Endothelial cell of umbilical vein (primary cell): ENCODE measurements at regions of chr16 and their contacts with region 1.

Region 1: DNA sequence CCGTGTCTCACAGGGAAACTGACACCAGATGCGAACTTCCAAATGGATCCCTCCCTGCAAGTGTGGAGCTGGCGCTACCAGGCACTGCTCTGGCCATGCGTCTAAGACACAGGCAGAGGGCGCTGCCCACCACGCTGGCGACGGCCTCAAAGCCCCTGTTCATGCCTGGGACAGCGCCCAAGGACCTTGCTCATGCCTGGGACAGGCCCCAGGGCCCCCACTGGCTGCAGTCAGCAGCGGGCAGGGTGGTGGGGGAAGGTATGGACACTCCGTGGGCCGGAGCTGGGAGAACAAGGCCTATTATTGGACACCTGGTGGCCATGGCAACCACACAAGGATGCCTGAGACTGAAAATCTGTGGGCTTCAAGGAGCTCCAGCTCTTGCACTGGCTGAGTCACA is 8.8 kb downstream of the ZG16B start:
- DNase-seq: peak; percentile 70
- H3K4me3 ChIP-seq: no peak overlapping the region
- H3K27ac ChIP-seq: no peak overlapping the region
- H3K4me1 ChIP-seq: peaks cover 23% of the 10 kb centered on the region
- H3K27me3 ChIP-seq: no peaks in the 10 kb centered on the region
- CTCF ChIP-seq: peak; percentile 95 to 98
- POLR2A ChIP-seq: no peak

Region 2: DNA sequence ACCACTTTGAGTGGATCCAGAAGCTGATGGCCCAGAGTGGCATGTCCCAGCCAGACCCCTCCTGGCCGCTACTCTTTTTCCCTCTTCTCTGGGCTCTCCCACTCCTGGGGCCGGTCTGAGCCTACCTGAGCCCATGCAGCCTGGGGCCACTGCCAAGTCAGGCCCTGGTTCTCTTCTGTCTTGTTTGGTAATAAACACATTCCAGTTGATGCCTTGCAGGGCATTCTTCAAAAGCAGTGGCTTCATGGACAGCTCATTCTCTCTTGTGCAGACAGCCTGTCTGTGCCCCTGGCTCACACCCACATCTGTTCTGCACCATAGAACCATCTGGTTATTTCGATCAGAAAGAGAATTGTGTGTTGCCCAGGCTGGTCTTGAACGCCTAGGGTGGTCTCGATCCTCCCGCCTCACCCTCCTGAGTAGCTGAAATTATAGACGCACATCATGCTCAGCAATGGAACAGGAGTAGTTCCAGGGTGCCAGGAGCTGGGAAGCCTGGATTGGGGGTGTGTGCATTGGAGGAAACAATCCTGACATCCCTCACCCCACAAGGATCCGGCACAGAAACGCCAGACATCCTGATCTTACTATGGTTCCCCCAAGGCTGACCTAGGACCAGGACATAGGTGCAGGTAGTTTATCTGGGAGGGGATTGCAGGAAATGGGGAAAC is 17.3 kb before region 1 on chr16:
- CTCF ChIA-PET with region 1: interaction called, 12 read pairs
- POLR2A ChIA-PET with region 1: no interaction called
- dilution Hi-C with region 1: no loop called
- intact Hi-C with region 1: no loop called
- DNase-seq: no peak
- H3K4me3 ChIP-seq: no peak overlapping the region
- H3K27ac ChIP-seq: no peak overlapping the region
- H3K4me1 ChIP-seq: no peaks in the 10 kb centered on the region
- H3K27me3 ChIP-seq: no peaks in the 10 kb centered on the region
- CTCF ChIP-seq: no peak
- POLR2A ChIP-seq: no peak

Region 3: DNA sequence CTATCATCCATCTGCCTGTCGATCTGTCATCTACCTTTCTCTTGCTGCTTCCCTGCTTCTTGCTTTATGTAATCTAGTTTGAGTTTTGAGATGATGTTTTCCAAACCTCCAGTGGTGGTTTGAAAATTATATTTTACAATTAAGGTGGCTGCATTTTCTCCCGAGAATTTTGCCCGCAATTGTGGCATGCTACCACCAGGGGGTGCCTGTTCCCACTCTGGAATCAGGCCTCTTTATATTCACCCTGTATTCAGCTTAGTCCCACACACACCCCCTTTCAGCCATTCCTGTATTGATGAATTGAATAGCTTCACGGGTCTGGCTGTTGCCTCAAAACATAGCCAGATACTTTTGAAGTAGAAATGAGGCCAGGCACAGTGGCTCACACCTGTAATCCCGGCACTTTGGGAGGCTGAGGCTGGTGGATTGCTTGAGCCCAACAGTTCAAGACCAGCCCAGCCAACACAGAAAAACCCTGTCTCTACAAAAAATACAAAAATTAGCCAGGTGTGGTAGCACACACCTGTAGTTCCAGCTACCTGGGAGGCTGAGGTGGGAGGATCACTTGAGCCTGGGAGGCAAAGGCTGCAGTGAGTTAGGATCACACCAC is 15.9 kb after region 1 on chr16:
- CTCF ChIA-PET with region 1: interaction called, 16 read pairs
- POLR2A ChIA-PET with region 1: no interaction called
- dilution Hi-C with region 1: no loop called
- intact Hi-C with region 1: no loop called
- DNase-seq: no peak
- H3K4me3 ChIP-seq: no peak overlapping the region
- H3K27ac ChIP-seq: no peak overlapping the region
- H3K4me1 ChIP-seq: no peaks in the 10 kb centered on the region
- H3K27me3 ChIP-seq: peaks cover 2 to 7% of the 10 kb centered on the region in 2 experiments
- CTCF ChIP-seq: peak; percentile 36 to 62
- POLR2A ChIP-seq: no peak

Region 4: DNA sequence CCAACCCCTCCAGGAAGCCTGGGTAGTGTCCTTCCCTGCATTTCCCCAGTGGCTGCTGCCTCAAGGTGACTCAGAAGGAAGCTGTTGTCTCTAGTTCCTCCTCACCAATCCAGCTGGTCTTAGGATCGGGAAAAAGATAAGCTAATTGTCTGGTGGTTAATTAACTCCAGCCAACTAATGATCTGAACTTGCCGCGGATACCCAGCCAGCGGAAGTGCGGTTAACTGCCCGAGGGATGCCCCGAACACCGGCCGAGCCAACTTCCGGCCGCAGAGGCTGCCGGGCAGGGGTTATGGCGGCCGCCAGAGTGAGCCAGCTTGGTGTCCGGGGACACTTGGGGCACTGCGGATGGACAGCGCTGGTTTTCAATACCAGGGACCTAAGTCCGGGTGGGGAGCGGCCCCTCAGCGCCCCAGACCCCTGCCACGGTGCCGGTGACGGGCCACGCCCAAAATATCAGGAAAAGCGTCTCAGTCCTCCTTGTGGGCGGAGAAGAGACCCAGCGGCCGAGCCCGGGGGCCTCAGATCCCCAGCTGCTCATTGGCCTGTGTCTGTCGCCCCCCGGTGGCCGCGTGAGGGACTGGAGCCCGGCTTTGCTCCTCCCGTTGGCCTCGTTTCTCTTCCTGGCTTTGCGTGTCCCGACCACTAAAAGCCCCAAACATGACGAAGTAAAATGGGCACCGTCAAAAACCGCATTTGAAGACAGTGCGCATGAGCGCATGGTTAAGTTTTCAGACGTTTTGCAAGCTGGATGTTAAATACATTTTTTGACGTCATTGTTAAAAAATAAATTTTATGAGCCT is 29.3 kb after region 1 on chr16:
- CTCF ChIA-PET with region 1: interaction called, 372 read pairs
- POLR2A ChIA-PET with region 1: interaction called, 8 read pairs
- dilution Hi-C with region 1: no loop called
- intact Hi-C with region 1: loop called (anchors 1 kb)
- DNase-seq: peak; percentile 93
- H3K4me3 ChIP-seq: peak overlapping the region in 2 of 3 experiments; percentile 34 to 45
- H3K27ac ChIP-seq: peak overlapping the region; percentile 81
- H3K4me1 ChIP-seq: peaks cover 5% of the 10 kb centered on the region
- H3K27me3 ChIP-seq: peaks cover 0 to 2% of the 10 kb centered on the region in 2 experiments
- CTCF ChIP-seq: peak; percentile 99
- POLR2A ChIP-seq: peak; percentile 76

Region 5: DNA sequence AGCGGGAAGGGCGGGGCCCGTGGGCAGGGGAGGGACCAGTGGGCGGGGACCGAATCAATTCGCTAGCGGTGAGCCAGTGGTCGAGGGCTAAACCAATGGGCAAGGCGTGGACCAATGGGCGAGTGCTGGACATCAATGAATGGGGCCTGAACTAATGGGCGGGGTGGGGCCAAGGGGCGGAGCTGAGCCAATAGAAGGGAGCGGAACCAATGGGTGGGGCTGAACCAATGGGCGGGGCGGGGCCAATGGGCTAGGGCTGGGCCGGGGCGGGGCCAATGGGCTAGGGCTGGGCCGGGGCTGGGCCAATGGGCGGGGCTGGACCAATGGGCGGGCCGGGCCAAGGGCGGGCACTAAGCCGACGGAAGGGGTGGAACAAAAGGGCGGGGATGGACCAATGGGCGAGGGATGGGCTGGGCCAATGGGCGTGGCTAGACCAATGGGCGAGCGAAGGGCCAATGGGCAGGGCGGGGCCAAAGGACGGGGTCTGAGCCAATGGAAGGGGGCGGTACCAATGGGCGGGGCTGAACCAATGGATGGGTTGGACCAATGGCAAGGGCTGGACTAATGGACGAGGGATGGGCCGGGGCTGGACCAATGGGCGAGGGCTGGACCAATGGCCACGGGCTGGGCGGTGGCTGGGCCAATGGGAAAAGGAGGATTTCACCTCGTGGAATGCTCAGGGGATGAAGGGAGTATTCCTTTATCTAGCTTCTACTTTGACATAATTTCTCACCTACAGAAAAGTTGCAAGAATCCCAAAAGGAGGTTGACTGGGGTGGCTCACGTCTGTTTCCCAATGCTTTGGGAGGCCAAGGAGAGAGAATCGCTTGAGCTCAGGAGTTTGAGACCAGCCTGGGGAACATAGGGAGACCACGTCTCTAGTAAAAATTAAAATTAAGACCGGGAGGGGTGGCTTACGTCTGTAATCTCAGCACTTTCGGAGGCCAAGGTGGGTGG is 66.8 kb after region 1 on chr16:
- CTCF ChIA-PET with region 1: interaction called, 26 read pairs
- POLR2A ChIA-PET with region 1: interaction called, 3 read pairs
- dilution Hi-C with region 1: no loop called
- intact Hi-C with region 1: loop called (anchors 1 kb)
- DNase-seq: peak; percentile 99
- H3K4me3 ChIP-seq: peak overlapping the region in 2 of 3 experiments; percentile 73 to 78
- H3K27ac ChIP-seq: no peak overlapping the region
- H3K4me1 ChIP-seq: peaks cover 9% of the 10 kb centered on the region
- H3K27me3 ChIP-seq: no peaks in the 10 kb centered on the region
- CTCF ChIP-seq: no peak
- POLR2A ChIP-seq: no peak

Region 6: GRCh38 chr16:2919511-2920255 is 80.8 kb after region 1 on chr16:
- CTCF ChIA-PET with region 1: interaction called, 50 read pairs
- POLR2A ChIA-PET with region 1: no interaction called
- dilution Hi-C with region 1: no loop called
- intact Hi-C with region 1: loop called (anchors 2 kb)
- DNase-seq: peak; percentile 74
- H3K4me3 ChIP-seq: no peak overlapping the region
- H3K27ac ChIP-seq: no peak overlapping the region
- H3K4me1 ChIP-seq: peaks cover 16% of the 10 kb centered on the region
- H3K27me3 ChIP-seq: no peaks in the 10 kb centered on the region
- CTCF ChIP-seq: peak; percentile 64 to 80
- POLR2A ChIP-seq: no peak

Region 7: DNA sequence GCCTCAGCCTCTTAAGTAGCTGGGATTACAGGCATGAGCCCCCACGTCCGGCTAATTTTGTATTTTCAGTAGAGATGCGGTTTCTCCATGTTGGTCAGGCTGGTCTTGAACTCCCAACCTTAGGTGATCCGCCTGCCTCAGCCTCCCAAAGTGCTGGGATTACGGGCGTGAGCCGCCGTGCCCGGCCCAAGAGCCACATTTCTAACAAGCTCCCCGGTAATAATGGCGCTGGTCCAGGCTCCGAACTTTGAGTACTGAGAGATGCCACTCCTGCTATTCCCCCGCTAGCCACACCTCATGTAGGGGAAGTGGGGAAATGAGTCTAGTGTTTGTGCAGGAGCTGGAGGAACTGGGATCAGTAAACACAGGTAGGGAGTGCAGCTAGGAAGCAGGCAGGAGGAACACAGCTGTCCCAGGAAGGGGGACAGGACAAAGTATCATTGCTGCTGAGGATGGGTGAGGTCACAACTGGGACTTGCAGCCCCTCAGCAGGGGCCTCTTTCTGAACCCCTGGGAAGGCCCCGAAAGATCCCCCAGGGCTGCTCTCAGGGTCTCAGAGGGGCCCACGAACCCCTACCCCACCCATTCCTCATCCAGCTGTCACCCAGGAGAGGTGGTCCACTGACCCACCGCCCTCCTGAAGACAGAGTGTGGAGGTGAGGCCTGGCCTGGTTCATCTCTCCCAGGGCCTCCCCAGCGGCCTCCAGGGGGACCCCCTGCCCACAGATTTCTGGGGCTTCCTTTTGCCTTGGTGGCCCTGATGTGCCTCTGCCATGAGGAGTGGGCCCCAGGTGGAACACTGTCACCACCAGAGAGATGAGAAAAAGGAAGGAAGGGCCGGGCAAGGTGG is 121.5 kb after region 1 on chr16:
- CTCF ChIA-PET with region 1: interaction called, 5 read pairs
- POLR2A ChIA-PET with region 1: no interaction called
- dilution Hi-C with region 1: no loop called
- intact Hi-C with region 1: loop called (anchors 1 kb)
- DNase-seq: no peak
- H3K4me3 ChIP-seq: no peak overlapping the region
- H3K27ac ChIP-seq: no peak overlapping the region
- H3K4me1 ChIP-seq: peaks cover 7% of the 10 kb centered on the region
- H3K27me3 ChIP-seq: peaks cover 19 to 29% of the 10 kb centered on the region in 2 experiments
- CTCF ChIP-seq: no peak
- POLR2A ChIP-seq: no peak